CD4-positive, alpha-beta T cell (primary cell): ENCODE measurements at regions of chr14 and their contacts with region 1.

Region 1: DNA sequence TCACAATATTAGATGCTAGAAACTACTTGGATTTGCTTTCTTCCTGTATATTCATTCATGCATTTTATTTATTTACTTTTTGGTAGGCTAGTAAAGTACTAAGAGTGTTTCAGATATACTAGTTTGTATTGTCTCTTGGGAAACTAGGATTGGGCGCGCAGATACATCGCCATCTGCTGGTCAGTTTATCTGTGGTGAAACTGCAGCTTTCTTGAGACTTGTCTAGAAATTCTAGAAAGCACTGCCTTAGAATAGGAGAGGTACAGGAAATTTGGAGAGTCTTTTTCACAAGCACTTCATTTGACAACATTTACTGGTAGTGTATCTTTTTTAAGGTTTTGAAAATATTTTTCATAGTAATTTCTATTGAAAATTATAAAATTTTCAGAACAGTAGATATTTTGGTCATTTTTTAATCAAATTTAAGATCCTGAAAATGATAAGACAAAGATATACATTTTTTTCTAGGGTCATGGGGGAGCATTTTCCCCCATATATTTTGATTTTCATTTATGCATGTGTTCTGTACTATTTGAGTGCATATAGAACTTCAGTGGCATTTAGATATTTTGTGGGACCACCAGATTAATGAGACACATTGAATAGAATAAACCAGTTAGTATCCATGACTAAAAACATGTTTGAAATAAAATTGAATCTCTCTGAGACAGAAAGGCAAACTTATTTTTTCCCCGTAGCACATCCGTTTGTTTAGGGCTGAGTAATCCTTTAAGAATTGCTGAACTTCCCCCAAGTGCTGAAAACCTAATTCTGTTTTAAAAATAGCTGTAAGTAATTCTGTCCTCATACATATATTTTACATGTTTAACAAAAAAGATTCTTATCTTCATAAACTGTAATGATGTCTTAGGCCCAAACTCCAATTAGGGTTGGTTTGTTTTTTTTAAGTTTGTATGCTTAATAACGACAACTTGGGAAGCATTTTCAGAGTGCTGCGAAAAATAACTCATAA is 44.5 kb downstream of the SLC38A6 start:
- DNase-seq: peak in 13 of 14 experiments; percentile 13 to 74 (median 25)
- ATAC-seq: peak; percentile 41
- H3K4me3 ChIP-seq: no peak overlapping the region
- H3K4me3 Mint-ChIP-seq: no peak overlapping the region
- H3K27ac ChIP-seq: no peak overlapping the region
- H3K27ac Mint-ChIP-seq: no peak overlapping the region
- H3K4me1 ChIP-seq: no peaks in the 10 kb centered on the region
- H3K4me1 Mint-ChIP-seq: no peaks in the 10 kb centered on the region
- H3K27me3 ChIP-seq: no peaks in the 10 kb centered on the region
- H3K27me3 Mint-ChIP-seq: no peaks in the 10 kb centered on the region
- CTCF ChIP-seq: peak; percentile 98

Region 2: GRCh38 chr14:60349663-60350365 is 675.7 kb before region 1 on chr14:
- CTCF ChIA-PET with region 1: interaction called, 3 read pairs
- POLR2A ChIA-PET with region 1: no interaction called
- intact Hi-C with region 1: loop called (anchors 1 to 2 kb)
- DNase-seq: peak in 6 of 14 experiments; percentile 4 to 63 (median 33)
- ATAC-seq: peak; percentile 34
- H3K4me3 ChIP-seq: no peak overlapping the region
- H3K4me3 Mint-ChIP-seq: no peak overlapping the region
- H3K27ac ChIP-seq: no peak overlapping the region
- H3K27ac Mint-ChIP-seq: no peak overlapping the region
- H3K4me1 ChIP-seq: no peaks in the 10 kb centered on the region
- H3K4me1 Mint-ChIP-seq: peaks cover 12% of the 10 kb centered on the region
- H3K27me3 ChIP-seq: no peaks in the 10 kb centered on the region
- H3K27me3 Mint-ChIP-seq: peaks cover 19% of the 10 kb centered on the region
- CTCF ChIP-seq: peak; percentile 75

Region 3: GRCh38 chr14:60355768-60356167 is 669.8 kb before region 1 on chr14:
- CTCF ChIA-PET with region 1: no interaction called
- POLR2A ChIA-PET with region 1: no interaction called
- intact Hi-C with region 1: loop called (anchors 1 to 2 kb)
- DNase-seq: no peak
- ATAC-seq: no peak
- H3K4me3 ChIP-seq: no peak overlapping the region
- H3K4me3 Mint-ChIP-seq: no peak overlapping the region
- H3K27ac ChIP-seq: no peak overlapping the region
- H3K27ac Mint-ChIP-seq: no peak overlapping the region
- H3K4me1 ChIP-seq: no peaks in the 10 kb centered on the region
- H3K4me1 Mint-ChIP-seq: no peaks in the 10 kb centered on the region
- H3K27me3 ChIP-seq: no peaks in the 10 kb centered on the region
- H3K27me3 Mint-ChIP-seq: peaks cover 8% of the 10 kb centered on the region
- CTCF ChIP-seq: no peak

Region 4: GRCh38 chr14:60622917-60623257 is 402.6 kb before region 1 on chr14:
- CTCF ChIA-PET with region 1: interaction called, 9 read pairs
- POLR2A ChIA-PET with region 1: no interaction called
- intact Hi-C with region 1: loop called in 1 of 2 experiments (anchors 1 kb)
- DNase-seq: no peak
- ATAC-seq: no peak
- H3K4me3 ChIP-seq: no peak overlapping the region
- H3K4me3 Mint-ChIP-seq: no peak overlapping the region
- H3K27ac ChIP-seq: no peak overlapping the region
- H3K27ac Mint-ChIP-seq: no peak overlapping the region
- H3K4me1 ChIP-seq: no peaks in the 10 kb centered on the region
- H3K4me1 Mint-ChIP-seq: no peaks in the 10 kb centered on the region
- H3K27me3 ChIP-seq: peaks cover 0 to 13% of the 10 kb centered on the region in 2 experiments
- H3K27me3 Mint-ChIP-seq: peaks cover 42% of the 10 kb centered on the region
- CTCF ChIP-seq: no peak

Region 5: GRCh38 chr14:60686865-60687264 is 338.7 kb before region 1 on chr14:
- CTCF ChIA-PET with region 1: no interaction called
- POLR2A ChIA-PET with region 1: no interaction called
- intact Hi-C with region 1: no loop called
- DNase-seq: no peak
- ATAC-seq: no peak
- H3K4me3 ChIP-seq: no peak overlapping the region
- H3K4me3 Mint-ChIP-seq: no peak overlapping the region
- H3K27ac ChIP-seq: no peak overlapping the region
- H3K27ac Mint-ChIP-seq: no peak overlapping the region
- H3K4me1 ChIP-seq: no peaks in the 10 kb centered on the region
- H3K4me1 Mint-ChIP-seq: no peaks in the 10 kb centered on the region
- H3K27me3 ChIP-seq: peaks cover 0 to 4% of the 10 kb centered on the region in 2 experiments
- H3K27me3 Mint-ChIP-seq: peaks cover 31% of the 10 kb centered on the region
- CTCF ChIP-seq: no peak